Activated CD4-positive, alpha-beta memory T cell treated with anti-CD3 and anti-CD28 coated beads for 36 hours (primary cell): ENCODE measurements at regions of chr7 and their contacts with region 1.

Region 1: DNA sequence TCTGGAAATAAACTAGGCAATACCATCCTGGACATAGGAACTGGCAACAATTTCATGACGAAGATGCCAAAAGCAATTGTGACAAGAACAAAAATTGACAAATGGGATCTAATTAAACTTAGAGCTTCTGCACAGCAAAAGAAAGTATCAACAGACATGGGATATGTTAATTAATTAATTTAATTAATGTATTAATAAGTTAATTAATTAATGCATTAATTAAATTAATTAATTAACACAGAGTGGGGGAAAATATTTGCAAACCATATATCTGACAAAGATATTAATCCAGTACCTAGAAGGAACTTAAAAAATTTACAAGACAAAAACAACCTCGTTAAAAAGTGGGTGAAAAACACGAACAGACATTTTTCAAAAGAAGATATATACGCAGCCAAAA is 83.6 kb downstream of the GCC1 start:
- DNase-seq: no peak
- H3K4me3 Mint-ChIP-seq: no peak overlapping the region
- H3K27ac Mint-ChIP-seq: no peak overlapping the region
- H3K4me1 Mint-ChIP-seq: no peaks in the 10 kb centered on the region
- H3K27me3 Mint-ChIP-seq: peaks cover 15% of the 10 kb centered on the region

Region 2: GRCh38 chr7:127437852-127438251 is 64.0 kb before region 1 on chr7:
- CTCF ChIA-PET with region 1: no interaction called
- POLR2A ChIA-PET with region 1: no interaction called
- intact Hi-C with region 1: no loop called
- DNase-seq: no peak
- H3K4me3 Mint-ChIP-seq: no peak overlapping the region
- H3K27ac Mint-ChIP-seq: no peak overlapping the region
- H3K4me1 Mint-ChIP-seq: no peaks in the 10 kb centered on the region
- H3K27me3 Mint-ChIP-seq: no peaks in the 10 kb centered on the region

Region 3: DNA sequence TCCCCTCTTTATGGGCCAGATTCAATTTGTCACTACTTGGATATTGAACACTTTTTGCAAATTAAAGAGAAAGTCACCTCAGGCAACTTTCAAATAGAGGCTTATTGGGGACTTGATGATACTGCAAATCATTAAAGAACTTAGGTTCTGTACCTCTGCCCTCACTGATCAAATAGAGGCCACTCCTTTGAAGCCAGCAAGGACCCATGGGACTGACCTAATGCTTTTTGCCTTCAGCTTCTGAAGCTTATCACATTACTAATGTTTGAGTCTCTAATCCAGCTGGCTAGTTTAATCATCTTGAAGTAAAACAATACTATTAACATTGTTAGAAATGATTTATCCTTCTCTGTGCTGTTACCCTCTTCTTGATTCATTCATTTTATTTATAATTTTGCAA is 16.3 kb before region 1 on chr7:
- CTCF ChIA-PET with region 1: no interaction called
- POLR2A ChIA-PET with region 1: interaction called, 10 read pairs
- intact Hi-C with region 1: no loop called
- DNase-seq: no peak
- H3K4me3 Mint-ChIP-seq: no peak overlapping the region
- H3K27ac Mint-ChIP-seq: no peak overlapping the region
- H3K4me1 Mint-ChIP-seq: peaks cover 10% of the 10 kb centered on the region
- H3K27me3 Mint-ChIP-seq: peaks cover 17% of the 10 kb centered on the region

Region 4: DNA sequence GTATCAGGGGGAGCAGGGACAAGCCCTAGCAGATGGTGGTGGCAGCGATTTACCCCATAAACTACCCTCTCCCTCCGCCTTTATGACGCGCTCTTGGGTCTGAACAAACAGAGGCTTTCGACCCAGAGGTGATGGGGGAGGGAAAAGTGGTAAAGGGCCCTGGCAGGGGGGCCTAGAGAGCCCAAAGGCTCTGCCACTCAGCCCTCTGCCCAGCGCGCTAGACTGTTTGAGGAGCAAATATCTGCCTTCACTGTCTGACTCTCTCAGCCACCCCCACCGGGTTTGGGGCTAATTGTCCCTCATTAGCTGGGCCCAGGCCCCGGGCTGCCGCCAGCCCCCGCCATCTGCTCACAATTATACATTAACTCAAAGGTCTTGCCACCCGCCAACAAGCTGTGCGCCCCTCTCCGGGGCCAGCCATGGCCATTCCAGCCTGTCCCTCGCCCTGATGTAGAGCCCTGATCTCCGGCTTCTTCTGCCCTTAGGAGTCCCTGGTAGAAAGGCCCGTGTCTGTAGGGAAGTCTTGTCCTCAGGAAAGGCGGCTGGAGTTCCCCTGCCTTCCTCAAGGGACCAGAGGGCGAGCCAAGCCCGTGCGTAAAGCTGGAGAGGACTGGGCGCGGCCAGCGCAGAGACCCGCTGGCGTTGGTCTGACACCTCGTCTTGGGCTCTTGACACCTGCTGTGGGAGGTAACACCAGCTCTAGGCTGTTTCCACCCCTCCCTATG is 118.0 kb after region 1 on chr7:
- CTCF ChIA-PET with region 1: no interaction called
- POLR2A ChIA-PET with region 1: no interaction called
- intact Hi-C with region 1: no loop called
- DNase-seq: no peak
- H3K4me3 Mint-ChIP-seq: no peak overlapping the region
- H3K27ac Mint-ChIP-seq: no peak overlapping the region
- H3K4me1 Mint-ChIP-seq: peaks cover 6% of the 10 kb centered on the region
- H3K27me3 Mint-ChIP-seq: peaks cover 48% of the 10 kb centered on the region